ENCODE measurements at regions of chr1 and their contacts with region 1.

Region 1: DNA sequence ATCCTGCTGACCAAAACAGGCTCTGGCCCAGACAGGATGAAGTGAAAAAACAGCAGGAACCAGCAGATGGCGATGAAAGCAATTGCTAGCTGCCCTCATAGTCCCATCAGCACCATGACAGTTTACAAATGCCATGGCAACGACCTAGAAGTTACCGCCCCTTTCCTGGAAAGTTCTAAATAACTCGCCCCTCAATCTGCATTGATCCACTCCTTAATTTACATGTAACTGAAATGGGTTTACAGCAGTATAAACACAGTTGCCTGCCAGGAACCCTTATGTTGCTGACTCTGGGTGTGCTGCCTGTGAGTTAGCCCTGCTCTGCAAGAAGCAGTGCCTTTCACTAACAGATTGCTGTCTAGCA is 65.5 kb upstream of the CR1L start:
- DNase-seq: peak; percentile 62 to 89 (median 70)
- ATAC-seq: peak; percentile 99
- H3K4me3 ChIP-seq: no peak overlapping the region
- H3K27ac ChIP-seq: no peak overlapping the region
- H3K4me1 ChIP-seq: peaks cover 0 to 5% of the 10 kb centered on the region in 2 experiments; a peak in 1 of 5 replicates
- H3K27me3 ChIP-seq: no peaks in the 10 kb centered on the region
- CTCF ChIP-seq: peak; percentile 88 to 95 (median 90)
- EP300 ChIP-seq: peak; percentile 24; the same call in 1 of the 2 replicates
- POLR2A ChIP-seq: no peak
- RAD21 ChIP-seq: peak; percentile 95 to 98

Region 2: GRCh38 chr1:207672522-207673130 is 93.2 kb after region 1 on chr1:
- CTCF ChIA-PET with region 1: interaction called, 6 read pairs
- POLR2A ChIA-PET with region 1: interaction called, 3 read pairs
- in situ Hi-C with region 1: loop called (anchors 5 kb)
- intact Hi-C with region 1: loop called (anchors 1 kb)
- DNase-seq: peak; percentile 48 to 79 (median 66)
- ATAC-seq: peak; percentile 87
- H3K4me3 ChIP-seq: no peak overlapping the region
- H3K27ac ChIP-seq: no peak overlapping the region
- H3K4me1 ChIP-seq: peaks cover 11 to 32% of the 10 kb centered on the region in 2 experiments; a peak in 4 of 5 replicates
- H3K27me3 ChIP-seq: no peaks in the 10 kb centered on the region
- CTCF ChIP-seq: peak; percentile 62 to 87 (median 78)
- EP300 ChIP-seq: no peak
- POLR2A ChIP-seq: no peak
- RAD21 ChIP-seq: peak; percentile 90 to 96

Region 3: GRCh38 chr1:207698822-207699483 is 119.5 kb after region 1 on chr1:
- CTCF ChIA-PET with region 1: interaction called, 22 read pairs
- POLR2A ChIA-PET with region 1: interaction called, 5 read pairs
- in situ Hi-C with region 1: loop called (anchors 5 kb)
- intact Hi-C with region 1: loop called (anchors 1 kb)
- DNase-seq: peak; percentile 30 to 87 (median 37)
- ATAC-seq: peak; percentile 92
- H3K4me3 ChIP-seq: no peak overlapping the region
- H3K27ac ChIP-seq: no peak overlapping the region
- H3K4me1 ChIP-seq: no peaks in the 10 kb centered on the region
- H3K27me3 ChIP-seq: no peaks in the 10 kb centered on the region
- CTCF ChIP-seq: peak; percentile 76 to 98 (median 95)
- EP300 ChIP-seq: no peak
- POLR2A ChIP-seq: no peak
- RAD21 ChIP-seq: peak; percentile 96 to 97

Measured in K562 (cell line).